H1 (cell line): ENCODE measurements at regions of chr12 and their contacts with region 1.

Region 1: DNA sequence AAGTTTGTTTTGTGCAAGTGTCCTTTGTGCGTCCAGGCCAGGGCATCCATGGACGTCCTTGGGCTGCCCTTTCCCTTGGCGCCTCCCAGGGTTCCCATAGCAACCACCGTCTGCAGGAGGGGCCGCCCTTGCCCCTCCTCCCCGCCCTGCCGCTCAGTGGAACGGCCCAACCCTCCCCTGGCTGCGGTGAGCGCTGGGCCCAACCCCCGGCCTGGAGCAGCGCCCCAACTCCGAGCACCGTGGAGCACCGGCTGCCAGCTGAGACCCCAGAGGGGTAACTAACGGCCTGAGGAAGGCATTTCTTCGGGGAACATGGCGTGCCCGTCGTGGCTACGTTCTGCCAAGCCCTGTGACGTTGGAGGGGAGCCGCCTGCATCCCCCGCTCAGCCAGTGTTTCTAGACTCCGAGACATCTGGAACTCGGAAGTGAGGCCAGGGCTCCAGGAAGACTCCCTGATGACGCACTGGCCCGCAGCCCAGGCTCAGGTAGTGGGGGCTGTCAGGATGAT is 5.3 kb upstream of the ACACB start:
- DNase-seq: peak; percentile 62 to 87
- H3K4me3 ChIP-seq: peak overlapping the region; percentile 12 to 58 (median 44)
- H3K27ac ChIP-seq: 0 out of 2 replicates have a peak overlapping the region, but pooled peaks have one; percentile 54
- H3K4me1 ChIP-seq: peaks cover 2 to 9% (median 4%) of the 10 kb centered on the region in 4 experiments; a peak in 5 of 7 replicates
- H3K27me3 ChIP-seq: no peaks in the 10 kb centered on the region; a peak in 1 of 7 replicates
- CTCF ChIP-seq: no peak
- EP300 ChIP-seq: 0 out of 3 replicates have a peak, but pooled peaks of 1 of the 2 experiments have one; percentile 18
- POLR2A ChIP-seq: peak in 1 of 2 experiments; percentile 73; a peak in 2 of 3 replicates
- RAD21 ChIP-seq: no peak

Region 2: GRCh38 chr12:109036975-109037374 is 74.1 kb before region 1 on chr12:
- CTCF ChIA-PET with region 1: no interaction called
- POLR2A ChIA-PET with region 1: no interaction called
- DNase-seq: no peak
- H3K4me3 ChIP-seq: no peak overlapping the region
- H3K27ac ChIP-seq: no peak overlapping the region
- H3K4me1 ChIP-seq: no peaks in the 10 kb centered on the region
- H3K27me3 ChIP-seq: no peaks in the 10 kb centered on the region
- CTCF ChIP-seq: no peak
- EP300 ChIP-seq: no peak
- POLR2A ChIP-seq: no peak
- RAD21 ChIP-seq: no peak

Region 3: GRCh38 chr12:109093022-109093918 is 17.8 kb before region 1 on chr12 and contains the start of gene ALKBH2:
- CTCF ChIA-PET with region 1: interaction called, 6 read pairs
- POLR2A ChIA-PET with region 1: interaction called, 34 read pairs
- DNase-seq: peak; percentile 70 to 94
- H3K4me3 ChIP-seq: peak within 1 kb of the TSS; percentile 1 to 57 (median 16); a peak in 6 of 8 replicates
- H3K27ac ChIP-seq: no peak within 1 kb of the TSS
- H3K4me1 ChIP-seq: peaks cover 0 to 7% (median 2%) of the 10 kb centered on the region in 4 experiments; a peak in 3 of 7 replicates
- H3K27me3 ChIP-seq: peaks cover 0 to 8% (median 5%) of the 10 kb centered on the region in 4 experiments; a peak in 5 of 7 replicates
- CTCF ChIP-seq: peak; percentile 93 to 99 (median 96)
- EP300 ChIP-seq: peak in 1 of 2 experiments; percentile 64; a peak in 1 of 3 replicates
- POLR2A ChIP-seq: peak; percentile 61 to 94
- RAD21 ChIP-seq: peak; percentile 96 to 97
- total RNA-seq, gene ALKBH2: 22.5 and 25.9 TPM in 2 replicates

Region 4: GRCh38 chr12:109121346-109121880 is 10.4 kb after region 1 on chr12:
- CTCF ChIA-PET with region 1: interaction called, 29 read pairs
- POLR2A ChIA-PET with region 1: interaction called, 3 read pairs
- DNase-seq: no peak
- H3K4me3 ChIP-seq: no peak overlapping the region
- H3K27ac ChIP-seq: no peak overlapping the region
- H3K4me1 ChIP-seq: peaks cover 0 to 3% (median 0%) of the 10 kb centered on the region in 4 experiments; a peak in 1 of 7 replicates
- H3K27me3 ChIP-seq: no peaks in the 10 kb centered on the region
- CTCF ChIP-seq: no peak
- EP300 ChIP-seq: no peak
- POLR2A ChIP-seq: no peak
- RAD21 ChIP-seq: no peak

Region 5: GRCh38 chr12:109134186-109134917 is 23.3 kb after region 1 on chr12:
- CTCF ChIA-PET with region 1: interaction called, 10 read pairs
- POLR2A ChIA-PET with region 1: interaction called, 4 read pairs
- DNase-seq: peak in 1 of 2 experiments; percentile 74
- H3K4me3 ChIP-seq: no peak overlapping the region
- H3K27ac ChIP-seq: no peak overlapping the region
- H3K4me1 ChIP-seq: no peaks in the 10 kb centered on the region
- H3K27me3 ChIP-seq: no peaks in the 10 kb centered on the region
- CTCF ChIP-seq: peak; percentile 74 to 79 (median 75)
- EP300 ChIP-seq: no peak
- POLR2A ChIP-seq: no peak
- RAD21 ChIP-seq: peak; percentile 65 to 71